Activated naive CD4-positive, alpha-beta T cell treated with anti-CD3 and anti-CD28 coated beads for 36 hours (primary cell): ENCODE measurements at regions of chr9 and their contacts with region 1.

Region 1: DNA sequence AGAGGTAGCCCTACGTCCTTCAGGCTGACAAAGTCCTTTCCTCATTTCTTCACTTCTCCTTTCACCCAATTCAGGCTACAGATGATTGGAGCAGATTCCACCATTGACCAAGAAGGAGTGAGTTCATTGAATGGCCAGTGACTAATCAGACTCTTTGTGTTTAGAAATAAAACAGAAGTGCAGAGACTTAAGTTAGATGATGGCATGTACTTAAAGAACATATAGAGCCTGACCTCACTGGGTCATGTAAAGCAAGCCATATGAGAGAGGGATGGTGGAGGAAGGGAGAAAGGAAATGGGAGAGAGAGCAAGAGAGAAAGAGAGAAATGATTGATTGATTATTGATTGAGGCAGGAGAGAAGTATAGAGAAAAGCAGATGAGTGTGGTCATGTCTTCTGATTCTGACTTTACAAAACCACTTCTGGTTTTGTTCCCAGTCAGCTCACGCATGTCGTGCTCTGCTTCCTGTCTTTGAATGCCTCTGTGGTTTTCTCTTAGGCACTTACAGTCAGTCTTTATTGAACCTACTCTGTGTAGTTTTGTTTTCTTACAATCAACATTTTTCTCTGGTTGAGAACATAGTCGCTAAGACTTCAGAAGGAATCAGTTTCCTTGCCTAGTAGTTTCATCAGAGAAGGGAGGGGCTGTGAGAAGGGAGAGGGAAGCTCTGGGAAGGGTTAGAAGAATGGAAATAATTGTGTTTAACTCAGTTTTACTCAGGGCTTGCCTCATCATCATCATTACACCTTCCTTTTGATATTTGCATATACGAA is 149.2 kb upstream of the KLF9 start:
- DNase-seq: peak; percentile 82
- H3K4me3 Mint-ChIP-seq: peak overlapping the region; percentile 38
- H3K27ac Mint-ChIP-seq: peak overlapping the region; percentile 97
- H3K4me1 Mint-ChIP-seq: peaks cover 52% of the 10 kb centered on the region
- H3K27me3 Mint-ChIP-seq: no peaks in the 10 kb centered on the region

Region 2: DNA sequence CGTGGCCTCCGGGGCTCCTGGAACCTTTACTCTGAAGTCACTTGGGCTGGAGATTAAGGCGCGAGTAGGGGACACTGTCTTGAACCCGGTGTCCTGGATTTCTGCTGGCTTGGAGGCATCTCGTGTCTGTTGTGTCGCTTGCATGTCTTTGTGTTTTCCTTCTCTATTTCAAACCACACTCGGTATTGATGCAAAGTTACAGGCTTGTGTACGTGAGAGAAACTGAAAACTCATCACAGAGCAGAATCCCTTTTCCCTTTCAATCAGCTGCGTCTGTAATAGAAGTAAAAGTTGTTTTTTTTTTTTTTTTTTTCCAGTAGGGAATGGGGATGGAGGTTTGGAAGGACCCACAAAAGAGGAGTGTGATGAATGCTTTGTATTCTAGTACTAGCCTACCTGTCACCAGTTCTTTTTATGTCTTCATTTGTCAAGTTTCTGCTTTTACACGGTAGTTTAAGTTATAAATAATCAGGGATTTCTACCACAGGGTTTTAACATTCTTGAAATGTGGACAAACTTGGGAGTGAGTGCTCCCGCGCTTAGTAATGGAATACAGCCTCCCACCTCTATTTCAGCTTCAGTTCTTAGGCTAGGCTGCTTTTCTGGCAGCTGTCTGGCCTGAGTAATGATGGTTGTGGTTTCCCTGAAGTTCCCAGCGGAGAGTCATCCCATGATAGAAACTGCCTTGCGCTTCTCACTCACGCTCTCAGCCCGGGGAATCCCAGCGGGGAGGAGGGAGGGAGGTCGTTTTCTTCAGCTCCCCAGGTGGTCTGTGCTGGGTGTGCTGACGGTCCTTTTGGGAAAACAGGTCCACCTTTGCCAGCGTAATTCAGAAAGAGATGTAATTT is 1388.8 kb before region 1 on chr9:
- CTCF ChIA-PET with region 1: no interaction called
- intact Hi-C with region 1: loop called (anchors 10 kb)
- DNase-seq: peak; percentile 84
- H3K4me3 Mint-ChIP-seq: peak overlapping the region; percentile 77
- H3K27ac Mint-ChIP-seq: peak overlapping the region; percentile 37
- H3K4me1 Mint-ChIP-seq: peaks cover 39% of the 10 kb centered on the region
- H3K27me3 Mint-ChIP-seq: peaks cover 43% of the 10 kb centered on the region

Region 3: DNA sequence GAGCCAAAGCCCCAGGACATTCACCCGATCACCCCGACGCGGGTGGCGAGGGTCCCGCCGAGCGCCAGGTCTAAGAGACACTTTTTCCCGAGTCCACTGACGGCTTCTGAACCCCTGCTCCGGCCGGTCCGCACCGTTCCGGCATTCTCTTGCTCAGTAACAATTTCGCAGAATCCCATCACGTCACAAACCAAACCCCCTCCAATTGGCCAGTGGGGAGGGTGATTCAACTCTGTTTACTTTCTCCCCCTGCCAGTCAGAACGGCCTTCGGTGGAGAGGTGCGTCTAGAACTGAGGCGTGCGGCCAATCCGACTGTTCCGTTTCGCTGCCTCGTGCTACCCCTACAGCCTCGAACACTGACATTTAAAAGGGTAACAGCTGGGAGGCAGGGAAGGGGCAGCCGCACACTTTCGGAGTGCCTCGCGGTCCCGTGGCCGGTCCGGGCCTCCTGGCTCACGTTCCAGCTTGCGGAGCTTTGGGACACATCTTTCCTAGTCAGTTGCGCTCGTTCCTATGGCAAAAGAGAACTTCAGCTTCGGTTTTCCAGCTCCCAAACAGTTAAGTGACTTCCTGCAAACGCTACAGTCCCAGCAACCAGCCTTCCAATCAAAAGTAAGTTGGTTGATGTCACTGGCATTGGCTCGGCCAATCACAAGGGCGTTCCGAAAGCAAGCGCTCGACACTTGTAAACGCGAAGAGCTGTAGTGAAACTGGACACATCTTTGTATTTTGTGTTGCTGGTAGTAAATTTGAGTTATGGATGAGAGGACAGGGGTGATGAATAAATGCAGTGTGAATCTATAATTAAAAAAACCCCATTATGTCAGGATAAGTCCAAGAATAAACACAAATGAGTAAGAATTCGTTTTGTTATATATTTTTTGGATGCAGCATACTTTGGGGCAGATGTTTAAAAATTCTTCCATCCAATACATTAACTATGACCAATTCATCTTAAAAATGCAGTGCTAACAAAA is 149.5 kb before region 1 on chr9 and contains the start of gene KLF9:
- CTCF ChIA-PET with region 1: interaction called, 17 read pairs
- intact Hi-C with region 1: loop called (anchors 1 kb)
- DNase-seq: peak; percentile 96
- H3K4me3 Mint-ChIP-seq: peak within 1 kb of the TSS; percentile 100
- H3K27ac Mint-ChIP-seq: peak within 1 kb of the TSS; percentile 100
- H3K4me1 Mint-ChIP-seq: peaks cover 39% of the 10 kb centered on the region
- H3K27me3 Mint-ChIP-seq: no peaks in the 10 kb centered on the region
- total RNA-seq, gene KLF9: 44.2 to 45.0 TPM

Region 4: DNA sequence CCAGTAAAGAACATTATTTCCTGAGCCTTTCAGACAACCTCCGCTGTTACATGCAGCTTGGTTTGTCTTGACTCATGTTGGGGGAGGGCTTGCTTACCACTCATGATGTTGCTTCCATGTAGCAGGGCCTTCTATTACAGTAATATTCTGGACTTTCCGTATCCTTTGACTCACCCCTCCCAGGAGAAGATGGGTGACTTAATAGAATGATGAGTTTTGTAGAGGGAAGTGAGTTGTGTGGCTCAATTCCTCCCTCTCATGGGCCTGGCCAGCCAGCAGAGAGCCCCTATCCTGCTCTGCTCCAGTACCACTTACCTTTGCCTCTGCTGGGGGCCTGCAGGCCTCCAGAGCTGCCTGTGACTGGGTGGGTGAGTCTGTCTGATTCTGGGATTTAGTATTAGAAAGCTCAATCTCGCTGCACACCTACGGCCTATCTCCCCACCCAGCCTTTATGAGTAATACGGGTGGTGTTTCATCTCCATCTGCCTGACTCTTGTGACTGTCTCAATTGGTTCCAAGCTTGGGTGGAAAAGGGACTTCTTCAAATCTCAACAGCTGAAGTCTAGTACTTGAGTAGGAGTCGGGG is 96.5 kb before region 1 on chr9:
- CTCF ChIA-PET with region 1: interaction called, 3 read pairs
- intact Hi-C with region 1: loop called (anchors 1 kb)
- DNase-seq: peak; percentile 73
- H3K4me3 Mint-ChIP-seq: peak overlapping the region; percentile 7
- H3K27ac Mint-ChIP-seq: peak overlapping the region; percentile 83
- H3K4me1 Mint-ChIP-seq: peaks cover 72% of the 10 kb centered on the region
- H3K27me3 Mint-ChIP-seq: no peaks in the 10 kb centered on the region

Region 5: GRCh38 chr9:70525519-70525918 is 38.1 kb before region 1 on chr9:
- CTCF ChIA-PET with region 1: interaction called, 7 read pairs
- intact Hi-C with region 1: loop called (anchors 1 kb)
- DNase-seq: no peak
- H3K4me3 Mint-ChIP-seq: no peak overlapping the region
- H3K27ac Mint-ChIP-seq: peak overlapping the region; percentile 5
- H3K4me1 Mint-ChIP-seq: peaks cover 30% of the 10 kb centered on the region
- H3K27me3 Mint-ChIP-seq: no peaks in the 10 kb centered on the region

Region 6: DNA sequence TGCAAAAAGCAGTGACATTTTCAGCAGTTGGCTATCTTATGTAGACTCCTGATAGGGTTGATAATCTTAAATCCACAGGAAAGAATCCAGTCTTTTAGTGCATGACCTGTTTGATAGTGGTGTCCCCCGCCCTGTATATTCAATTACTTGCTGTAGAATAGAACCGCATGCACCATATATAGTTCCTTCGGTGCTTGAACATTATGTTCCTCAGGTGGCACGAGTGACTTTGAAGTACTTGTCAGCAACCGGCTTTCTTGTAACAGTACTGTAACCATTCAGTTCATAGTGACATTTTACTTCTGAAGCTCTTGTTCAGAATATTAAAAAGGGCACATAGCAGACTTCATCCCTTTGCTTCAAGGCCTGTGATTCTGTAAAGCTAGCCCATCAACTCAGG is 14.1 kb after region 1 on chr9:
- CTCF ChIA-PET with region 1: interaction called, 4 read pairs
- intact Hi-C with region 1: loop called (anchors 1 kb)
- DNase-seq: no peak
- H3K4me3 Mint-ChIP-seq: no peak overlapping the region
- H3K27ac Mint-ChIP-seq: no peak overlapping the region
- H3K4me1 Mint-ChIP-seq: peaks cover 13% of the 10 kb centered on the region
- H3K27me3 Mint-ChIP-seq: no peaks in the 10 kb centered on the region

Region 7: DNA sequence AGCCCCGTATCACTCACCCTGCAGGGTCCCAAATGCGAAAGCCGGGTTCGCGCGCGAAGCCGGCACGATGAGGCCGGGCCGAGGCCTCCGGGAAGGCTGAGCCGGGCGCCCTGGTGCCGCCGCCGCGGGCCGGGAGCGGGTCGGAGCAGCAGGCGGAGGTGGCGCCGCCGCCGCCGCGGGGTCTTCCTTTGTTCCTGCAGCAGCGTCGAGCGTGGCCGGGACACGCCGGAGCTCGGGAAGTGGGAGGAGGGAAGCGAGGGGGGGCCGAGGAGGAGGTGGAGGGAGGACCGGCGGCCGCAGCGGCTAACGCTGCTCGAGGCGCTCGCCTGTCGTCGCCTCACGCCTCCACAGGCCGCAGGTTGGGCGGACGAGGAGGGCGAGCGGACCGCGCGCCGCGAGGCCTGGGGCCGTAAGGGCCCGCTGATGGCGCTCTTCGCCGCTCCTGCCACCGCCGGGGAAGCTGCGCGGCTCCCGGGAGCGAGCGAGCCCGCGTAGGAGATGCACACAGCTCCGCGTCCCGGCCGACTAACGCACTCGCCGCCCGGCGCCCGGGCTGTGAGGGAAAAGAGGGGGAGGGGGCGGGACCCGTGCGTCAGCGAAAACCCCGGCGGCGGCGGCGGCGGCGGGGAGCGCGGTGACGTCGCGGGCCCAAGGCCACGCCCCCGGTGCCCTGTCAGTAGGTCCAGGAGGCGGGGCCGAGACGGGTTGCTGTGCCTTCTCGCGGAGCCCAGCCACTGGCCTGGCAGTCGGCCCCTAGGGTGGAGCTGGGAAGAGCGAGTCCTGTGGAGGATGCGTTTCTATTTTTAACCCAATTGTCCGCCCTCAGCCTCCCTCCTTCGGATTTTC is 1801.3 kb after region 1 on chr9 and contains the start of gene ZFAND5:
- CTCF ChIA-PET with region 1: no interaction called
- intact Hi-C with region 1: loop called (anchors 10 kb)
- DNase-seq: peak; percentile 94
- H3K4me3 Mint-ChIP-seq: peak within 1 kb of the TSS; percentile 82
- H3K27ac Mint-ChIP-seq: peak within 1 kb of the TSS; percentile 95
- H3K4me1 Mint-ChIP-seq: peaks cover 31% of the 10 kb centered on the region
- H3K27me3 Mint-ChIP-seq: no peaks in the 10 kb centered on the region
- total RNA-seq, gene ZFAND5: 71.9 to 73.2 TPM